ENCODE measurements at regions of chr11 and their contacts with region 1.

Region 1: DNA sequence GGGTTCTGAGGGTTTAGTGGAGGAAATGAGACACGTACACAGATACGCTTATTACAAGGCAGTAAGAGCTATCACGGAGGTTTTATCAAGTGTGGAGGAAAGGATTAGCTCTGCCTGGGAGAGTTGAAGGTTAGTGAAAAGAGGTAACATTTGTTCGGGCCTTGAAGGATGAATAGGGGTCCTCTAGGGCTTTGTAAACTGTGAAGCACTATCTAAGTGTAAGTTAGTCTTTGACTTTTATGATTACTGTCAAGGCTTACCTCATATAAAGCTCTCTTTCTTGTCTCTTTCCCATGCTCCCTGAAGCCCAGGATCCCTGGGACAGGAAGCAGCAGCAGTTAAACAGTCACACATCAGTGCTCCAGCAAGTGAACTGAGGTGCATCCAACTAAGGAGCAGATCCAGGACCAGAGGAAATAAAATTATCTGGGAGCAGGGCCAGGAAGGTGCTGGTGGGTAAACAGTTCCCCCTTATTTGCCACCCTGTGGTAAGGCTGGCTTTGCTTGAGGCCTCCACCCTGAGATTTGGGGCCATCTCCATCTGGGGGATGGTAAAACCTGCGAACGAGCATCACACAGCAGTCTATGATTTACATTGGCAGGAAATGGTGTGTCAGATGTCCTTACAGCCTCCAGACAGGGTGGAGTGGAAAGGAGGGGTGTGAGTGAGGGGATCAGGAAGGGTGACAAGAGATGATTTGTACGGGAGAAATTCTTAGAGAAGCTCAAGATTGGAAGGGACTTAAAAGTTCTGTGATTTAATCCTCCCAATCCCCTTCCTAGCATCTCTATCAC is 27.2 kb downstream of the GVQW3 start:
- DNase-seq: no peak
- ATAC-seq: no peak
- H3K4me3 ChIP-seq: no peak overlapping the region
- H3K4me3 Mint-ChIP-seq: no peak overlapping the region
- H3K27ac ChIP-seq: no peak overlapping the region
- H3K27ac Mint-ChIP-seq: no peak overlapping the region
- H3K4me1 ChIP-seq: no peaks in the 10 kb centered on the region
- H3K4me1 Mint-ChIP-seq: no peaks in the 10 kb centered on the region
- H3K27me3 ChIP-seq: peaks cover 0 to 8% of the 10 kb centered on the region in 2 experiments
- H3K27me3 Mint-ChIP-seq: no peaks in the 10 kb centered on the region

Region 2: GRCh38 chr11:76551400-76551799 is 143.0 kb after region 1 on chr11:
- CTCF ChIA-PET with region 1: no interaction called
- POLR2A ChIA-PET with region 1: interaction called in 1 of 2 experiments, 14 read pairs
- DNase-seq: peak in 1 of 35 experiments; percentile 13
- ATAC-seq: no peak
- H3K4me3 ChIP-seq: no peak overlapping the region
- H3K4me3 Mint-ChIP-seq: no peak overlapping the region
- H3K27ac ChIP-seq: no peak overlapping the region
- H3K27ac Mint-ChIP-seq: no peak overlapping the region
- H3K4me1 ChIP-seq: no peaks in the 10 kb centered on the region
- H3K4me1 Mint-ChIP-seq: peaks cover 0 to 4% (median 2%) of the 10 kb centered on the region in 3 donors
- H3K27me3 ChIP-seq: no peaks in the 10 kb centered on the region
- H3K27me3 Mint-ChIP-seq: no peaks in the 10 kb centered on the region

Measured in T-cell (primary cell).